Pancreas (tissue), 10 donors: ENCODE measurements at regions of chr1 and their contacts with region 1.

Region 1: DNA sequence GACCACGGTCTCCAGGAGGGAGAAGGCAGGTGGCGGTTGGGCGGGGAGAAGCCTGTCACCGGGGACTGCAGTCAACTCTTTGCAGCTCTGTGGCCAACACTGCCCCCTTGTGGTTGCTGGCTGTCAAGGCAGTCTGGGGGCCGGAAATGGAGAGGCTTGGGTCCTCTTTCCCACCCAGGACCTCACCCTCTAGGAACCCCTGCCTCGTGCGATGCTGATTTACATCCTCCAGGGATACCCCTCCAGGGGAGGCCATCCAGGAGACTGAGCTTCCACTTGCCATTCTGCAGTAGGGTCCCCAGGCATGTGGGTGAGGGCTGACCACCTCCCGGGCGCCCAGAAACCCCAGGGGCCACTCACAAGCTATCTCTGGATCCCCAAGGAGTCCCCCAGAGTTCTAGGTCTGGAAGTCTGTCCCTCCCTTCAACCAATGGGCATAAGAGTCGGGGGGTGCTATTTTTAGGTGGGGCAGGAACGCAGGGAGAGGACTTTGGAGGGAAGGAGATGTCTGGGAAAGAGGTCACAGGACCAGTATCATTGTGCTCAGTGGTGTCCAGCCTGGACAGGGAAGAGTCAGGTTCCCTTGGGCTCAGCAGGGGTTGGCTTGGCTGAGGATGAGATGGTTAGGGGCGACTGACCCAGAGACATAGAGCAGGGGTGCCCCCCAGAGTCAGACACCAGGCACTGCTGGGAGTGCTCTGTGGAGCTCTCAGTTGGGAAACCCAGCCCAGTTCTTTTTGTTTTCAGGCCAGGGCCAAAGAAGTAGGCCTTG is 7.1 kb upstream of the GPR61 start:
- DNase-seq: peak; percentile 72 to 93 (median 86)
- ATAC-seq: peak; percentile 89 to 97 (median 92)
- H3K4me3 ChIP-seq: peak overlapping the region in 1 of 4 donors; percentile 18
- H3K27ac ChIP-seq: no peak overlapping the region
- H3K4me1 ChIP-seq: peaks cover 0 to 9% (median 0%) of the 10 kb centered on the region in 3 donors
- H3K27me3 ChIP-seq: no peaks in the 10 kb centered on the region
- CTCF ChIP-seq: peak; percentile 94 to 98 (median 96)

Region 2: GRCh38 chr1:109249654-109250465 is 282.7 kb before region 1 on chr1:
- intact Hi-C with region 1: loop called in 1 of 3 experiments (anchors 5 kb)
- DNase-seq: peak in 3 of 6 donors; percentile 12 to 76 (median 74)
- ATAC-seq: peak; percentile 4 to 58 (median 21)
- H3K4me3 ChIP-seq: peak overlapping the region; percentile 53 to 73 (median 64)
- H3K27ac ChIP-seq: no peak overlapping the region
- H3K4me1 ChIP-seq: peaks cover 0 to 4% (median 0%) of the 10 kb centered on the region in 3 donors
- H3K27me3 ChIP-seq: no peaks in the 10 kb centered on the region
- CTCF ChIP-seq: no peak

Region 3: DNA sequence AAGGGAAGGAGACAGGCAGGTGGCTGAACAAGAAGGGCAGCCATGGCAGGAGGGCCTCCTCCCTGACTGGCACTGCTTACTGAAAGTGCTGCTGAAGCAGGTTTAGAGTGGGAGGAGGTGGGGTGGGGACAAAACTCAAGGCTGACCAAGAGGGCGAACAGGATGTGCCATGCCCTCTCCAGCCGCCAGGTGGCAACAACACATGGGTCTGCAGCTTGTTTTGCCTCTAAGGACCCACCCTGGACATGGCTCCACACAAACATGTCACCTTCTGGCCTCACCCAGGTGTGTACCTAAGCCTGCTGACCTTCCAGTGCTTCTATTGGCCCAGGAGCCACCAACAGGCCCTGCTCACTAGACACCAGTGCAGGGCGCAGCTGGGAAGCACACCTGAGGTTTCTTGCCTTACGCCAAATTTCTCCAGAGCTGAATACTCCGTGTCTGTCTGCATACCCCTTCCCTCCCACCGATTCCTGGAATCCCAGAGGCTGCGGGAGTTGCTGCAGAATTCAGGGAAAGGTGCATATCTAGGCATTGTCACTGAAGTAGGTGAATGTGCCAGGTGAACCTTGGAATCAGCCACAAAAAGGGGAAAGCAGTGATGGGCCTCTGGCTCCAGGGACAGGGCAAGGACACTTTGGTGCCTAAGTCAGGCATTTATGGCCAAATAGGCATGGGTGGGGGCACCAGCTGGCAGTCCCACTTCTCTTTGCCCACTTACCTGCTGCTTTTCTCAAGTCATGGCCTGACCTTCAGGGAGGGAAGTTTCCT is 254.9 kb before region 1 on chr1:
- intact Hi-C with region 1: loop called in 1 of 3 experiments (anchors 10 kb)
- DNase-seq: peak; percentile 79 to 91 (median 87)
- ATAC-seq: peak; percentile 85 to 88 (median 87)
- H3K4me3 ChIP-seq: no peak overlapping the region
- H3K27ac ChIP-seq: peak overlapping the region in 1 of 4 donors; percentile 54
- H3K4me1 ChIP-seq: peaks cover 0 to 9% (median 6%) of the 10 kb centered on the region in 3 donors
- H3K27me3 ChIP-seq: no peaks in the 10 kb centered on the region
- CTCF ChIP-seq: peak; percentile 71 to 87 (median 77)

Region 4: DNA sequence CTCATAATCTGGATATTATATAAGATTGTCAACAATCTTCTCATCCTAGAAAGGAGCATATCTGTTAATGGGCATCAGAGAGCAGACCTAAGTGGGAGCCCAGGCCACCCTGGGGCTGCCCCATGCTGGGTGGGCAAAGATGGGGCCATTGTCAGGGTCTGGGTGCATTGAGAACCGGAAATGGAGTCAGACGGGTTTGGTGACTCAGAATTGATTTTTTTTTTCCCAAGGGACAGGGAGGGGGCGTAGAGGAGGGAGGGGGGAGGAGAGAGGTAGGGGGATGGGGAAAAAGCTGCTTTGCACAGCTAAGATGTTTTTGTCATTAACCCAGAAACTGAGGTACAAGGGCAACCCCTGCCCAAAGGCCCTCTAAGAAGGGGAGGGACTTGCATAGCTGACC is 47.5 kb before region 1 on chr1:
- intact Hi-C with region 1: loop called in 2 of 3 experiments (anchors 5 kb)
- DNase-seq: no peak
- ATAC-seq: no peak
- H3K4me3 ChIP-seq: no peak overlapping the region
- H3K27ac ChIP-seq: no peak overlapping the region
- H3K4me1 ChIP-seq: peaks cover 0 to 8% (median 0%) of the 10 kb centered on the region in 3 donors
- H3K27me3 ChIP-seq: no peaks in the 10 kb centered on the region
- CTCF ChIP-seq: no peak

Region 5: GRCh38 chr1:109493805-109494539 is 38.6 kb before region 1 on chr1 and contains the start of gene CYB561D1:
- intact Hi-C with region 1: loop called in 2 of 3 experiments (anchors 5 kb)
- DNase-seq: peak; percentile 83 to 96 (median 89)
- ATAC-seq: peak; percentile 95 to 98 (median 96)
- H3K4me3 ChIP-seq: peak within 1 kb of the TSS; percentile 58 to 100 (median 82)
- H3K27ac ChIP-seq: peak within 1 kb of the TSS in 2 of 4 donors; percentile 28 to 73
- H3K4me1 ChIP-seq: peaks cover 0 to 7% (median 6%) of the 10 kb centered on the region in 3 donors
- H3K27me3 ChIP-seq: no peaks in the 10 kb centered on the region
- CTCF ChIP-seq: peak; percentile 91 to 98 (median 96)
- total RNA-seq, gene CYB561D1: 8.1 to 11.6 (median 9.7) TPM